Activated T-helper 1 cell treated with anti-CD3 and anti-CD28 coated beads, Interleukin-12 subunit alpha, Interleukin-12 subunit beta, Interleukin-2, Interleukin-4 antibody, amounts not matched to agents 30 ng/mL and 10 ng/mL and 1 ng/mL, durations not matched to agents 14 hours and 24 hours and 36 hours (primary cell): ENCODE measurements at regions of chr12 and their contacts with region 1.

Region 1: GRCh38 chr12:27179400-27180214 is 64.5 kb upstream of the STK38L start:
- DNase-seq: peak; percentile 25
- H3K4me3 Mint-ChIP-seq: peak overlapping the region; percentile 19
- H3K27ac Mint-ChIP-seq: peak overlapping the region; percentile 66
- H3K4me1 Mint-ChIP-seq: peaks cover 53% of the 10 kb centered on the region
- H3K27me3 Mint-ChIP-seq: no peaks in the 10 kb centered on the region

Region 2: GRCh38 chr12:27142101-27142721 is 37.4 kb before region 1 on chr12:
- intact Hi-C with region 1: loop called (anchors 2 kb)
- DNase-seq: peak; percentile 16
- H3K4me3 Mint-ChIP-seq: no peak overlapping the region
- H3K27ac Mint-ChIP-seq: no peak overlapping the region
- H3K4me1 Mint-ChIP-seq: peaks cover 31% of the 10 kb centered on the region
- H3K27me3 Mint-ChIP-seq: no peaks in the 10 kb centered on the region

Region 3: GRCh38 chr12:27207615-27208413 is 28.2 kb after region 1 on chr12:
- intact Hi-C with region 1: loop called (anchors 1 kb)
- DNase-seq: peak; percentile 50
- H3K4me3 Mint-ChIP-seq: no peak overlapping the region
- H3K27ac Mint-ChIP-seq: no peak overlapping the region
- H3K4me1 Mint-ChIP-seq: peaks cover 28% of the 10 kb centered on the region
- H3K27me3 Mint-ChIP-seq: peaks cover 1% of the 10 kb centered on the region

Region 4: GRCh38 chr12:27220057-27220987 is 40.7 kb after region 1 on chr12:
- intact Hi-C with region 1: loop called (anchors 5 kb)
- DNase-seq: no peak
- H3K4me3 Mint-ChIP-seq: peak overlapping the region; percentile 29
- H3K27ac Mint-ChIP-seq: peak overlapping the region; percentile 59
- H3K4me1 Mint-ChIP-seq: peaks cover 20% of the 10 kb centered on the region
- H3K27me3 Mint-ChIP-seq: peaks cover 4% of the 10 kb centered on the region

Region 5: DNA sequence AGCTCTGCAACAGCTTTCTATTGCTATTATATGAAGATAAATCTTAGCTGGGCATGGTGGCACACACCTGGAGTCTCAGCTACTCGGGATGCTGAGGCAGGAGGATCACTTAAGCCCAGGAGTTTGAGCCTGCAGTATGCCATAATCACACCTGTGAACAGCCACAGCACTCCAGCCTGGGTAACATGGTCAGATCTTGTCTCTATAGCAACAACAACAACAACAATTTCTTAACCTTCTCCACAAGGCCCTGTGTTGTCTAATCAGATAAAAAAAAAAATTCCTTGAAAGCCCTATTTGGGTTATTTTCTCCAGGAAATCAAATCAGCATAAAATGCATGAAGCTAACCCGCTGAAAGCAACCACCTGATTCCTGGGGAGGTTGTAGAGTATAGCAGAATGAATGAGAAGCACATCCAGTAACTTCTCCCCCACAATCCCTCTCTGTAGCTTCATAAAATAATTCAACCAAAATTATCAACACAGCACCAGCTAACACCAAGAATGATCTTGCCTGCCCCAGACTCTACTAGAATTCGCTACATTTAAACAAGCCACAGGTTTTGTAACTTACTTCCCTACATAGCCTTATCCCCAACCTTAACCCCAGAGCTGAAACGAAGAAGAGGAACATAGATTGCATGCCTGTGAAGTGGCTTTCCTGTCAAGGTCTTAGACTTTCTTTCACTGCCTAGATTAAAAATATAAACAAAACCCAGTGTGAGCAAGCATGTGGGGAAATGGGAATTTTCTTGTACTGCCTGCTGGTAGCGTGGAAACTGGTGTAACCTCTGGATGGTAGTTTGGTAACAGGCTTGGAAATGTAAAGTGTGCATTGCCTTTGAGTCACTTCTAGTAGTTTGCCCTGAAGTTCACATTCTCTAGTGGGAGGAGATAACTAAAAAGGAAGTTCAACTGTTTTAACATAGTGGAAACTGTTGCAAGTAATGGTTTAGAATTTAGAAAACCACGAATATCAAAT is 58.5 kb after region 1 on chr12:
- intact Hi-C with region 1: loop called (anchors 1 kb)
- DNase-seq: peak; percentile 19
- H3K4me3 Mint-ChIP-seq: peak overlapping the region; percentile 67
- H3K27ac Mint-ChIP-seq: peak overlapping the region; percentile 68
- H3K4me1 Mint-ChIP-seq: peaks cover 41% of the 10 kb centered on the region
- H3K27me3 Mint-ChIP-seq: peaks cover 2% of the 10 kb centered on the region

Region 6: GRCh38 chr12:27462151-27462694 is 282.6 kb after region 1 on chr12:
- intact Hi-C with region 1: loop called (anchors 5 kb)
- DNase-seq: no peak
- H3K4me3 Mint-ChIP-seq: peak overlapping the region; percentile 53
- H3K27ac Mint-ChIP-seq: peak overlapping the region; percentile 84
- H3K4me1 Mint-ChIP-seq: peaks cover 69% of the 10 kb centered on the region
- H3K27me3 Mint-ChIP-seq: no peaks in the 10 kb centered on the region